Lower leg skin (tissue), 4 donors: ENCODE measurements at regions of chr2 and their contacts with region 1.

Region 1: GRCh38 chr2:45929674-45930395 is 278.4 kb downstream of the PRKCE start:
- DNase-seq: peak in 1 of 2 donors; percentile 17
- H3K4me3 ChIP-seq: no peak overlapping the region
- CTCF ChIP-seq: no peak
- POLR2A ChIP-seq: no peak

Region 2: GRCh38 chr2:46082521-46083485 is 153.0 kb after region 1 on chr2:
- intact Hi-C with region 1: no loop called
- DNase-seq: no peak
- H3K4me3 ChIP-seq: no peak overlapping the region
- CTCF ChIP-seq: no peak
- POLR2A ChIP-seq: no peak

Region 3: GRCh38 chr2:47160660-47161059 is 1230.8 kb after region 1 on chr2:
- intact Hi-C with region 1: loop called (anchors 5 kb)
- DNase-seq: no peak
- H3K4me3 ChIP-seq: no peak overlapping the region
- CTCF ChIP-seq: no peak
- POLR2A ChIP-seq: no peak